ENCODE measurements at regions of chr6 and their contacts with region 1.

Region 1: GRCh38 chr6:43687437-43688347 is at the start of gene MRPS18A:
- DNase-seq: no peak
- ATAC-seq: peak; percentile 99
- H3K4me3 ChIP-seq: peak within 1 kb of the TSS; percentile 95 to 96
- H3K27ac ChIP-seq: peak within 1 kb of the TSS; percentile 93
- H3K4me1 ChIP-seq: peaks cover 12% of the 10 kb centered on the region
- H3K27me3 ChIP-seq: no peaks in the 10 kb centered on the region
- CTCF ChIP-seq: no peak
- total RNA-seq, gene MRPS18A: 45.8 TPM

Region 2: DNA sequence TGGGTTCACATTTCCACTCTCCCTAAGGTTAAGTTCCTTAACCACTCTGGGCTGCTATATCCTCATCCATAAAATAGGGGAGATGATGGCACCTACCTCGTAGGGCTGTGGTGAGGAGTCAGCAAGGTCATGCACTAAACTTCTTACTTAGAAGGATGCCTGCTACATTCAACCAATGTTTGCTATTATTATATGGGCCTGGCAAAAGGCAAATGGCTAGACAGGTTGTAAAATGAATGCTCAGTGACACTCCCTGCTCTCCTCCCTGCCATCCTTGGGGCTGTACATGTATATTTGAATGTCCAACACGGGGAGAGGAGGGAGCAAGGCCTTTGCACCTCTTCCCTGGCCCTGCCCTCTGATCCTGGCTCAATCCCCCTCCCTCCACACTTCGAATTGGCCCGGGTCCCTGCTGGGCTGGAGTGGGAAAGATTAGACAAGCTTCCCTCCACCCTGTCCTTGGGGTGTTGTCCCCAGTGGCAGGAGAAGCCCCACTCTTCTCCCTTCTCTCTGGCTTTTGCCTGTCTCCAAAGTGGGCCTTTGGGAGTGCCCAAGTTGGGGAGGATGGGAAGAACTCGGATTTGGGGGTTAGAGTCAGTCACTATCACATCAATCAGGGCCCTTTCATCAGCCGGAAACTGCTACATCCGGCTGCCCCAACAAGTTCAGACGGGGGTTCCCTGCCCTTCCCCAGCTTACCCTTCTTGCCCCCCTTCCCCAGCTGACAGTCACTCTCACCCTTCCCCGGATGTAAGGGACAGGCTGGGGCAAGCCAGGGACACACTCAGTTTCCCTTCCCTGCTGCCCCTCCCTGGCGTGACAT is 46.0 kb after region 1 on chr6:
- CTCF ChIA-PET with region 1: no interaction called
- POLR2A ChIA-PET with region 1: no interaction called
- in situ Hi-C with region 1: loop called (anchors 5 kb)
- intact Hi-C with region 1: no loop called
- DNase-seq: no peak
- ATAC-seq: no peak
- H3K4me3 ChIP-seq: no peak overlapping the region
- H3K27ac ChIP-seq: no peak overlapping the region
- H3K4me1 ChIP-seq: no peaks in the 10 kb centered on the region
- H3K27me3 ChIP-seq: no peaks in the 10 kb centered on the region
- CTCF ChIP-seq: no peak

Region 3: GRCh38 chr6:43779852-43780236 is 92.2 kb after region 1 on chr6:
- CTCF ChIA-PET with region 1: no interaction called
- POLR2A ChIA-PET with region 1: no interaction called
- in situ Hi-C with region 1: no loop called
- intact Hi-C with region 1: no loop called
- DNase-seq: no peak
- ATAC-seq: peak; percentile 57; the same call in 1 of the 2 replicates
- H3K4me3 ChIP-seq: no peak overlapping the region
- H3K27ac ChIP-seq: no peak overlapping the region
- H3K4me1 ChIP-seq: peaks cover 18% of the 10 kb centered on the region
- H3K27me3 ChIP-seq: no peaks in the 10 kb centered on the region
- CTCF ChIP-seq: no peak

Region 4: GRCh38 chr6:43865932-43866645 is 178.4 kb after region 1 on chr6:
- CTCF ChIA-PET with region 1: no interaction called
- POLR2A ChIA-PET with region 1: no interaction called
- in situ Hi-C with region 1: no loop called
- intact Hi-C with region 1: no loop called
- DNase-seq: no peak
- ATAC-seq: no peak
- H3K4me3 ChIP-seq: no peak overlapping the region
- H3K27ac ChIP-seq: no peak overlapping the region
- H3K4me1 ChIP-seq: no peaks in the 10 kb centered on the region
- H3K27me3 ChIP-seq: no peaks in the 10 kb centered on the region
- CTCF ChIP-seq: no peak

Measured in Panc1 (cell line).